ENCODE measurements at regions of chr12 and their contacts with region 1.

Region 1: GRCh38 chr12:52338241-52338960 is 17.2 kb upstream of the KRT83 start:
- H3K4me3 ChIP-seq: no peak overlapping the region
- H3K27ac ChIP-seq: no peak overlapping the region
- H3K4me1 ChIP-seq: 0 out of 2 replicates have a peak, but pooled peaks cover 2% of the 10 kb centered on the region
- CTCF ChIP-seq: no peak

Region 2: DNA sequence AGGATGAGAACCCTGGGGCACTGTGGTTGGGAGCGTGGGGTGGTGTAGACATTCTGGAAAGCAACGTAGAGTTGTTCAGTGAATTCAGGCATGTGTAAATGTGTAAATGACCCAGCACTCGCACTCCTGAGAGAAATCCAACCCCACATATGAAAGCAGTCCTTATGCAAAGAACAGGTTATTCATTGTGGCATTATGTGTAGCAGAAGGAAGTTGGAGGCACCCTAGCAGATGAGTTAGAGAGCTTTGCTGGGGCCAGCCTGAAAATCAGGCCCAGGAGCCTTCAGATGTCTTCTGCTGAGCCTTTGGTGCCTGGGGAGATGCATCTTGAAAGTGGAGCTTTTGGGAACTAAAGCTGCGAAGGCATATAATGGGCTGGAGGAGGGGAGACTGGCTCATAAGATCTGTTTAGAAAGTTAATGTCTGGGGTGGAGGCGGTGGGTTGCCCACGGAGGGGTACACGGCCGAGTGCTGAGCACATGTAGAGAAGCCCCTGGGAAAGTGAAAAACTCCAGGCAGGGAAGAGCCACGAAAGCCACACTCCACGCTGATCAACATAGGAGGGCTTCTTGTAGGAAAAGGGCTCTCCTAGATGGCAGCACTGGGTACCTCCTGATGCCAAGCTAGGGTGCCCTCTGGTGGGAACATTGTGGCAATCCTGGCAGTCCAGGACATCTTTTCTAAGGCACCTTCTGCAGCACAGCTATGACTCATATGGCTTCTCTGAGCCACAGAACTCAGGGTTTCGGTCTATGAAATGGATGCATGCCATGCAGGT is 11.2 kb before region 1 on chr12:
- CTCF ChIA-PET with region 1: interaction called, 49 read pairs
- POLR2A ChIA-PET with region 1: interaction called, 4 read pairs
- H3K4me3 ChIP-seq: no peak overlapping the region
- H3K27ac ChIP-seq: no peak overlapping the region
- H3K4me1 ChIP-seq: no peaks in the 10 kb centered on the region
- CTCF ChIP-seq: peak; percentile 97

Region 3: GRCh38 chr12:53054112-53054833 is 715.9 kb after region 1 on chr12:
- CTCF ChIA-PET with region 1: no interaction called
- POLR2A ChIA-PET with region 1: no interaction called
- H3K4me3 ChIP-seq: peak overlapping the region; percentile 73
- H3K27ac ChIP-seq: peak overlapping the region; percentile 45; the same call in 1 of the 2 replicates
- H3K4me1 ChIP-seq: peaks cover 24% of the 10 kb centered on the region
- CTCF ChIP-seq: no peak

Measured in HEK293 (cell line).